GM13977 (cell line): ENCODE measurements at regions of chr18 and their contacts with region 1.

Region 1: GRCh38 chr18:64037812-64038414 is 68.0 kb downstream of the SERPINB8 start:
- DNase-seq: peak; percentile 60
- CTCF ChIP-seq: peak; percentile 56

Region 2: DNA sequence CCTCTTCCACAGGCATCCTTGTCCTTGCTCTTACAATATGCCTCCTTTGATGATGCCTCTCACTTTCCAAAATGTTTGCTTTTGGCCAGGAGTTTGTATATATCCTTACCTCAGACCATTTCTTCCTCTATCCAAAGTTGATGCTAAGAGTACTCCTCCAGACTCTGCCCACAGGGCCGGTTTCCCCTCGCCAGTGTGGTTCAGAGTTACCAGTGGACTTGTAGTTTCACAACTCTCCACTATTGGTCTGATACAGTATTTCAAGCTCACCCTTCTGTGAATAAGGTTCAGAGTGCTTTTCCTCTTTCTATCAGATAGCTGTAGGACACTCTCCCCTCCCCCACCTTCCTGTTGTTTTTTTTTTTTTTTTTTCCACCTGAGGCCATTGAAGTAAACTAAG is 153.2 kb after region 1 on chr18:
- in situ Hi-C with region 1: no loop called
- DNase-seq: no peak
- CTCF ChIP-seq: no peak

Region 3: DNA sequence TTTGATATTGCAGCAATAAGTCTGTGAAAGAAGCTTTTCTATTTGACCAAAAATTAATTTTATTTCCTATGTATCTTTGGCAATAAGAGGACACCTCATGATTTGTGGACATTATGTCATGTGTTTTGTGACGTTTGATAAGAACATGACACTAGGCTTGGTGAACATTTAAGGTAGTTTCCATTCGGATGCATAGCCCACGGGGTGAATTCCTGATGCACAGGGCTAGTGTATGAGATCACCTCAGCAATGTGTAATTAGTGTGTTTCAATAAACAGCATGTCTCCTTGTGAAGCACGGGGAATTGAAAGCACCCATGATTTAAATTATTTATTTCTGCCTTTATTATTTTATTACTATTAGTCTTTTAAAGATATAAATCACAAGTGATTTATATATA is 257.1 kb after region 1 on chr18:
- in situ Hi-C with region 1: no loop called
- DNase-seq: no peak
- CTCF ChIP-seq: no peak

Region 4: DNA sequence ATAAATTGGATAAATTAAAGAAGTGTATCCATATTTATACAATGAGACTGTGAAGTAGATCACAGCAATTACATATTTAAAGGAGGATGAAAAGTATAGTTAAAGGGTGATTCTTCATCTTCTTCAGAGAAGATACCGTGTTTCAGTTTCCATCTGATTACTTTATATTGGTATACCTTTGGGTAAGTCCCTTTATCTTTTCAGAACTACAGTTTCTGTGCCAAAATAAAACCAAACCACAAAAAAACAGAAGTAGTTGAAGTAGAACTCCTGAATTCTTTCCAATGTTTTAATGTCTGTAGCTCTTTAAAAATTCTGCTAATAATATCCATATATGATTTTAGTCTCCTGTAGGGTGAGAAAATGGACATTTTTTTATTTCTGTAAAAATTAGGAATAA is 342.2 kb after region 1 on chr18:
- in situ Hi-C with region 1: loop called (anchors 25 kb)
- DNase-seq: peak; percentile 47
- CTCF ChIP-seq: no peak